Esophagus muscularis mucosa (tissue), 4 donors: ENCODE measurements at regions of chr11 and their contacts with region 1.

Region 1: GRCh38 chr11:126194121-126194543 is 17.3 kb downstream of the RPUSD4 start:
- DNase-seq: no peak
- H3K4me3 ChIP-seq: no peak overlapping the region
- H3K27ac ChIP-seq: no peak overlapping the region
- H3K4me1 ChIP-seq: peaks cover 0 to 18% (median 14%) of the 10 kb centered on the region in 4 donors
- H3K27me3 ChIP-seq: no peaks in the 10 kb centered on the region
- CTCF ChIP-seq: peak; percentile 72 to 79 (median 76)
- EP300 ChIP-seq: no peak
- POLR2A ChIP-seq: no peak

Region 2: DNA sequence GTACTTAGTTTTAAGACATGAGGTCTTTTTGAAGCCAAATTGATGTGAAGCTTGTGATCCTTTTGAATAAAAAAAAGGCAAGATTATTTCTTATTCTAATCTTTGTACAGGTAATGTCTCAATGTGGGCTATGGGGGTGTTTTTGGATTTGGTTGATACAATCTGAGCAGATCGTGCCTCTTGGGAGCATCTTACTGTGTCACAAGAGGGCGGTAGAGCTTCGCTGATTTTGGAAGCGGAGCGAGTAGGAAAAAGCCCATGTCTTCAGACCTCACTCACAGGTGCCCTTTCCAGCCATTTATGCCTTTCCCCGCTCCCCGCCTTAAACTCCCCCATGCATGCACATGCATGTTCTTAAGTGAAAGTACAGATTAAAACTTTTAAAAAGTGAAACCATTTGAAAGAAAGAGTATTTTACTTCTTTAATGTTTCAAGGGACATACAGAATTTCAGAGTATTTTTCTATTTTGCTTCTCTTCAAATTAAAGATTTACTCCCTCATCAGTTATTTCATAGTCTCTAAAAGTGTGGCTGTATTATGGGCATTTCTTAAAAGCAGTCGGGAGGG is 271.0 kb before region 1 on chr11:
- intact Hi-C with region 1: loop called (anchors 1 kb)
- DNase-seq: peak; percentile 91
- H3K4me3 ChIP-seq: no peak overlapping the region
- H3K27ac ChIP-seq: no peak overlapping the region
- H3K4me1 ChIP-seq: peaks cover 0 to 7% (median 3%) of the 10 kb centered on the region in 4 donors
- H3K27me3 ChIP-seq: peaks cover 0 to 16% (median 0%) of the 10 kb centered on the region in 4 donors
- CTCF ChIP-seq: peak; percentile 78 to 88 (median 82)
- EP300 ChIP-seq: no peak
- POLR2A ChIP-seq: no peak